Naive thymus-derived CD4-positive, alpha-beta T cell (primary cell): ENCODE measurements at regions of chr12 and their contacts with region 1.

Region 1: GRCh38 chr12:53213348-53213747 is 6.3 kb upstream of the ITGB7 start:
- DNase-seq: peak; percentile 71 to 85 (median 80)
- ATAC-seq: peak; percentile 84
- H3K4me3 ChIP-seq: no peak overlapping the region
- H3K4me3 Mint-ChIP-seq: peak overlapping the region in 2 of 10 donors; percentile 5 to 21
- H3K27ac ChIP-seq: peak overlapping the region; percentile 27
- H3K27ac Mint-ChIP-seq: peak overlapping the region in 8 of 9 donors; percentile 24 to 92 (median 74)
- H3K4me1 ChIP-seq: peaks cover 35 to 44% of the 10 kb centered on the region in 2 donors
- H3K4me1 Mint-ChIP-seq: peaks cover 54 to 93% (median 74%) of the 10 kb centered on the region in 7 donors
- H3K27me3 ChIP-seq: no peaks in the 10 kb centered on the region
- H3K27me3 Mint-ChIP-seq: no peaks in the 10 kb centered on the region

Region 2: DNA sequence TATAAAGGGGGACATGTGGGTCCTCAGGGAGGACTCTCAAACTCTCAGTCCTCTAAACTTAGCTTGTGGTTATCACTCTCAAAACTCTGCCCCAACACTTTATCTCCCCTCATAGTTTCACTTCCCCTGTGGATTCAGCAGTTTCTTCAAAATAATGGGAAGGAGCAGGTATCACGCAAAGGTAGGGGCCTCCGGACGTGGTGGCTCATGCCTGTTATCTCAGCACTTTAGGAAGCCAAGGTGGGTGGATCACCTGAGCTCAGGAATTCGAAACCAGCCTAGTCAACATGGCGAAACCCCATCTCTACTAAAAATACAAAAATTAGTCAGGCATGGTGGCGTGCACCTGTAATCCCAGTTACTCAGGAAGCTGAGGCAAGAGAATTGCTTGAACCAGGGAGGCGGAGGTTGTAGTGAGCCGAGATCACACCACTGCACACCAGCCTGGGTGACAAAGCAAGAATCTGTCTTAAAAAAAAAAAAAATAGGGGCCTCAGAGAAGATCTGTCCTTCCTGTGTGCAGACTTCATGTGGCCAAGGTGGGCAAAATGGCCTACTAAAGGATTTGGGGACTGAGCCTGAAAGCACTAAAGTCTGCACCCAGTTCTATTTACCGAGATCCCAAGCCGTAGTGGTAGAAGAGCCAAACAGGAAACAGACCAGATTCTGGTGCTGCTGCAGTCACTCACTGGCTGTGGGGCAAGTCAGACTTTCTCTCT is 12.7 kb before region 1 on chr12:
- CTCF ChIA-PET with region 1: interaction called, 88 read pairs
- POLR2A ChIA-PET with region 1: interaction called, 103 read pairs
- intact Hi-C with region 1: no loop called
- DNase-seq: peak in 4 of 9 donors; percentile 41 to 46 (median 42)
- ATAC-seq: peak; percentile 29
- H3K4me3 ChIP-seq: peak overlapping the region; percentile 21
- H3K4me3 Mint-ChIP-seq: peak overlapping the region; percentile 65 to 90 (median 76)
- H3K27ac ChIP-seq: peak overlapping the region; percentile 75
- H3K27ac Mint-ChIP-seq: peak overlapping the region; percentile 82 to 95 (median 92)
- H3K4me1 ChIP-seq: peaks cover 70 to 94% of the 10 kb centered on the region in 2 donors
- H3K4me1 Mint-ChIP-seq: peaks cover 56 to 91% (median 74%) of the 10 kb centered on the region in 7 donors
- H3K27me3 ChIP-seq: no peaks in the 10 kb centered on the region
- H3K27me3 Mint-ChIP-seq: no peaks in the 10 kb centered on the region

Region 3: GRCh38 chr12:53231826-53232645 is 18.7 kb after region 1 on chr12 and contains the start of gene RARG:
- CTCF ChIA-PET with region 1: interaction called, 12 read pairs
- POLR2A ChIA-PET with region 1: interaction called, 13 read pairs
- intact Hi-C with region 1: no loop called
- DNase-seq: peak in 3 of 9 donors; percentile 33 to 78 (median 58)
- ATAC-seq: peak; percentile 74
- H3K4me3 ChIP-seq: peak within 1 kb of the TSS; percentile 52
- H3K4me3 Mint-ChIP-seq: peak within 1 kb of the TSS; percentile 83 to 95 (median 88)
- H3K27ac ChIP-seq: peak within 1 kb of the TSS; percentile 56
- H3K27ac Mint-ChIP-seq: peak within 1 kb of the TSS; percentile 77 to 90 (median 86)
- H3K4me1 ChIP-seq: peaks cover 40% of the 10 kb centered on the region in 2 donors
- H3K4me1 Mint-ChIP-seq: peaks cover 38 to 76% (median 67%) of the 10 kb centered on the region in 7 donors
- H3K27me3 ChIP-seq: no peaks in the 10 kb centered on the region
- H3K27me3 Mint-ChIP-seq: no peaks in the 10 kb centered on the region
- total RNA-seq, gene RARG: 22.4 to 73.1 (median 57.4) TPM

Region 4: DNA sequence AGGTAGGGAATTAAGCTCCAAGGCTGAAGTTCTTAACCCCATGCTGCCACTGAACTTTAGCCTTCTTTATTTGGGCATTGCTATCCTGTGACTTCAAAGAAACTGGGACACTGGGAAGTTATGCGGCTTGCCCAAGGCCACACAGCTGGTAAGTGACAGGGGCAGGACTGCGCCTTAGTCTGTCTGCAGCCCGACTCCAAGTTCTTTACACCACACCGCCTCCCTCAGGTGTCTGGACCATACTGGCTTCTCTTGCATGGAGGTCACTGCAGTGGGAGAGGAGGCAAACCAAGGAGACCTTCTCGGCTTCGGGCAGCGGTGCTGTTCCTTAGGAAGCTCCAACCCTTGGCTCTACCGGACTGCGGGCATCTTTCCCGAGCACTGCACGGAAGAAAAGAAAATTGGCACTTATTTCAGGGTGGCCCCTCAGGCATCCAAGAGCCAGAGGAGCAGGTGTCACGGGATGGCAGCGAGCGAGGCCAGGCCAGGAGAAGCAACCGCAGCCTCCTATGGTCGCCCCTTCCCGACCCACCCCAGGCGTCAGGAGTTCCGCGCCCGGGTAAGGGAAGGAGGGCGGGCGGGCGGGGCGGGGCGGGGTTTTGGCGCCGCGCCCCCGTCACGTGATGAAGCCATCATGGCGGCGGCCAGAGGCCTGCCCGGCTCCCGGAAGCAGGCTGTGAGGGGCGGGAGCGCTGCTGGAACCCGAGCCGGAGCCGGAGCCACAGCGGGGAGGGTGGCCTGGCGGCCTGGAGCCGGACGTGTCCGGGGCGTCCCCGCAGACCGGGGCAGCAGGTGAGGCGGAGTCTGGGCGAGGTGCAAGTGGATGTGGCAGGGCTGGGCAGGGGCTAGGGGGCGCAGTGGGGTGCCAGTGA is 38.4 kb after region 1 on chr12:
- CTCF ChIA-PET with region 1: interaction called, 121 read pairs
- POLR2A ChIA-PET with region 1: interaction called, 28 read pairs
- intact Hi-C with region 1: loop called (anchors 1 kb)
- DNase-seq: peak; percentile 58 to 81 (median 69)
- ATAC-seq: peak; percentile 90
- H3K4me3 ChIP-seq: peak overlapping the region; percentile 95
- H3K4me3 Mint-ChIP-seq: peak overlapping the region; percentile 89 to 98 (median 96)
- H3K27ac ChIP-seq: peak overlapping the region; percentile 95
- H3K27ac Mint-ChIP-seq: peak overlapping the region; percentile 84 to 97 (median 94)
- H3K4me1 ChIP-seq: peaks cover 26 to 38% of the 10 kb centered on the region in 2 donors
- H3K4me1 Mint-ChIP-seq: peaks cover 37 to 59% (median 48%) of the 10 kb centered on the region in 7 donors
- H3K27me3 ChIP-seq: no peaks in the 10 kb centered on the region
- H3K27me3 Mint-ChIP-seq: no peaks in the 10 kb centered on the region

Region 5: GRCh38 chr12:53267999-53268647 is 54.8 kb after region 1 on chr12 and contains the start of gene ESPL1:
- CTCF ChIA-PET with region 1: interaction called, 72 read pairs
- POLR2A ChIA-PET with region 1: interaction called, 32 read pairs
- intact Hi-C with region 1: loop called (anchors 1 kb)
- DNase-seq: peak; percentile 67 to 91 (median 81)
- ATAC-seq: peak; percentile 93
- H3K4me3 ChIP-seq: peak within 1 kb of the TSS; percentile 80
- H3K4me3 Mint-ChIP-seq: peak within 1 kb of the TSS; percentile 95 to 99 (median 96)
- H3K27ac ChIP-seq: peak within 1 kb of the TSS; percentile 83
- H3K27ac Mint-ChIP-seq: peak within 1 kb of the TSS; percentile 44 to 98 (median 88)
- H3K4me1 ChIP-seq: peaks cover 9 to 11% of the 10 kb centered on the region in 2 donors
- H3K4me1 Mint-ChIP-seq: peaks cover 10 to 54% (median 20%) of the 10 kb centered on the region in 7 donors
- H3K27me3 ChIP-seq: no peaks in the 10 kb centered on the region
- H3K27me3 Mint-ChIP-seq: no peaks in the 10 kb centered on the region
- total RNA-seq, gene ESPL1: 0.08 to 65.4 (median 1.1) TPM

Region 6: GRCh38 chr12:53287741-53288216 is 74.4 kb after region 1 on chr12:
- CTCF ChIA-PET with region 1: interaction called, 159 read pairs
- POLR2A ChIA-PET with region 1: interaction called, 12 read pairs
- intact Hi-C with region 1: loop called (anchors 1 kb)
- DNase-seq: peak; percentile 43 to 76 (median 69)
- ATAC-seq: peak; percentile 94
- H3K4me3 ChIP-seq: no peak overlapping the region
- H3K4me3 Mint-ChIP-seq: no peak overlapping the region
- H3K27ac ChIP-seq: no peak overlapping the region
- H3K27ac Mint-ChIP-seq: peak overlapping the region in 4 of 9 donors; percentile 8 to 86 (median 25)
- H3K4me1 ChIP-seq: no peaks in the 10 kb centered on the region
- H3K4me1 Mint-ChIP-seq: peaks cover 4 to 11% (median 5%) of the 10 kb centered on the region in 7 donors
- H3K27me3 ChIP-seq: no peaks in the 10 kb centered on the region
- H3K27me3 Mint-ChIP-seq: no peaks in the 10 kb centered on the region

Region 7: GRCh38 chr12:53344824-53345485 is 131.6 kb after region 1 on chr12:
- CTCF ChIA-PET with region 1: interaction called, 9 read pairs
- POLR2A ChIA-PET with region 1: interaction called, 5 read pairs
- intact Hi-C with region 1: loop called (anchors 1 kb)
- DNase-seq: peak; percentile 42 to 68 (median 63)
- ATAC-seq: peak; percentile 89
- H3K4me3 ChIP-seq: peak overlapping the region; percentile 79
- H3K4me3 Mint-ChIP-seq: peak overlapping the region; percentile 91 to 100 (median 97)
- H3K27ac ChIP-seq: peak overlapping the region; percentile 66
- H3K27ac Mint-ChIP-seq: peak overlapping the region; percentile 87 to 96 (median 91)
- H3K4me1 ChIP-seq: peaks cover 0 to 10% of the 10 kb centered on the region in 2 donors
- H3K4me1 Mint-ChIP-seq: peaks cover 11 to 25% (median 17%) of the 10 kb centered on the region in 7 donors
- H3K27me3 ChIP-seq: no peaks in the 10 kb centered on the region
- H3K27me3 Mint-ChIP-seq: peaks cover 0 to 13% (median 0%) of the 10 kb centered on the region in 5 donors